ENCODE measurements at regions of chr22 and their contacts with region 1.

Region 1: GRCh38 chr22:41448189-41448808 is 1.7 kb upstream of the TOB2 start:
- DNase-seq: peak; percentile 90
- H3K4me3 Mint-ChIP-seq: peak overlapping the region; percentile 97
- H3K27ac Mint-ChIP-seq: peak overlapping the region; percentile 98
- H3K4me1 Mint-ChIP-seq: peaks cover 15% of the 10 kb centered on the region
- H3K27me3 Mint-ChIP-seq: peaks cover 2% of the 10 kb centered on the region

Region 2: DNA sequence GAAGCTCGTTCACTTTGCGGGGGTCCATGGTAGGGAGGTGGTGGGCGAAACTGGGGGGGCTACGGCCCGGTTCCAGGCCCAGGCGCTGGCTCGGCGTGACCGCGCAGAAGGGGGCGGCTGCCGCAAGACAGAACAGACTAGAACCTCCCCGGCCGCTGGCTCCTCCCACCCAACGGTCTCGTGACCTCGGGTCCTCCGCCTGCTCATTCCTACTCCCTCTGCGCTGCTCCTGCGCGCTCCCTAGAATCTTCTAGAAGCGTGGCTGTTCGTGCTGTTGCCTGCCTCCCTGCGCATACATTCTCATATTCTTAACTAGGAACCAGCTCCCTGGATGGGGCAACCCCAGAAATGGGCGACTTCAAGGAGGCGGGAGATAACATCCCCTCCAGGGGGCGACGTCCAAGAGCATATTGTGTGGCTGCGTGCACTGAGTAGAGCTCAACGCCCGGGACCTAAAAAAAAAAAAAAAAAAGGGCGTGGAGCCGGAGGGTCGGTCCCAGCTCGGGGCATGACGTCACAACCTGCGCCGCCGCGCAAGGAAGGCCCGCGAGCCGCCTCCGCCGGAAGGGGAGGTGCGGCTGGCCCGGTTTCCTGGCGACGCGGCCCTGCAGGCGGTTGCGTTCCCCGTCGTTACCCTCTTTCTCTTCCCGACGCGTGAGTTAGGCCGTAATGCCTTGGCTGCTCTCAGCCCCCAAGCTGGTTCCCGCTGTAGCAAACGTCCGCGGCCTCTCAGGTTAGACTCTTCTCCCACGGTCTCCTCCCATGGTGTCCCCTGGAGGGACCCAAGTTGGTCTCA is 591.6 kb before region 1 on chr22 and contains the starts of genes ST13 and XPNPEP3:
- intact Hi-C with region 1: loop called (anchors 1 kb)
- DNase-seq: peak; percentile 96
- H3K4me3 Mint-ChIP-seq: peak within 1 kb of the TSS; percentile 98
- H3K27ac Mint-ChIP-seq: peak within 1 kb of the TSS; percentile 100
- H3K4me1 Mint-ChIP-seq: peaks cover 38% of the 10 kb centered on the region
- H3K27me3 Mint-ChIP-seq: no peaks in the 10 kb centered on the region
- total RNA-seq, gene ST13: 190 and 192 TPM in 2 replicates
- total RNA-seq, gene XPNPEP3: 14.7 and 15.3 TPM in 2 replicates

Region 3: GRCh38 chr22:41204992-41205900 is 243.1 kb before region 1 on chr22 and contains the start of gene L3MBTL2:
- intact Hi-C with region 1: loop called (anchors 1 kb)
- DNase-seq: peak; percentile 98
- H3K4me3 Mint-ChIP-seq: peak within 1 kb of the TSS; percentile 97
- H3K27ac Mint-ChIP-seq: peak within 1 kb of the TSS; percentile 94
- H3K4me1 Mint-ChIP-seq: peaks cover 21% of the 10 kb centered on the region
- H3K27me3 Mint-ChIP-seq: peaks cover 12% of the 10 kb centered on the region
- total RNA-seq, gene L3MBTL2: 51.9 and 56.6 TPM in 2 replicates

Region 4: DNA sequence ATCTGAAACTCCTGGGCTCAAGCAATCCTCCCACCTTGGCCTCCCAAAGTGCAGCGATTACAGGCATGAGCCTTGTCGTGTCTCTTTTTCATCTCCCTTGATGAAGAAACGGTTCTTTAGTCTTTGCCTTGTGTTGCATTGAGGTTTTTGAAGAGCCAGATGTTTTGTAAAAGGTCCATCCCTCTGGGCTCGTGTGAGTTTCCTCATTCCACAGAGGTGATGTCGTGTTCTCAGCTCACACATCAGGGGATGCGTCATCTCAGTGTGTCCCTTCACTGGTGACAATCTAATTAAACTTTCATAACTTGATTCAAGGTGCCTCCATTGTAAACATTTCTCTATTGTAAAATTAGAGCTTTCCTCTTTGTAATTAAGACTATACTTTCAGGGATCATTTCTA is 96.2 kb before region 1 on chr22:
- intact Hi-C with region 1: no loop called
- DNase-seq: no peak
- H3K4me3 Mint-ChIP-seq: no peak overlapping the region
- H3K27ac Mint-ChIP-seq: no peak overlapping the region
- H3K4me1 Mint-ChIP-seq: no peaks in the 10 kb centered on the region
- H3K27me3 Mint-ChIP-seq: no peaks in the 10 kb centered on the region

Region 5: DNA sequence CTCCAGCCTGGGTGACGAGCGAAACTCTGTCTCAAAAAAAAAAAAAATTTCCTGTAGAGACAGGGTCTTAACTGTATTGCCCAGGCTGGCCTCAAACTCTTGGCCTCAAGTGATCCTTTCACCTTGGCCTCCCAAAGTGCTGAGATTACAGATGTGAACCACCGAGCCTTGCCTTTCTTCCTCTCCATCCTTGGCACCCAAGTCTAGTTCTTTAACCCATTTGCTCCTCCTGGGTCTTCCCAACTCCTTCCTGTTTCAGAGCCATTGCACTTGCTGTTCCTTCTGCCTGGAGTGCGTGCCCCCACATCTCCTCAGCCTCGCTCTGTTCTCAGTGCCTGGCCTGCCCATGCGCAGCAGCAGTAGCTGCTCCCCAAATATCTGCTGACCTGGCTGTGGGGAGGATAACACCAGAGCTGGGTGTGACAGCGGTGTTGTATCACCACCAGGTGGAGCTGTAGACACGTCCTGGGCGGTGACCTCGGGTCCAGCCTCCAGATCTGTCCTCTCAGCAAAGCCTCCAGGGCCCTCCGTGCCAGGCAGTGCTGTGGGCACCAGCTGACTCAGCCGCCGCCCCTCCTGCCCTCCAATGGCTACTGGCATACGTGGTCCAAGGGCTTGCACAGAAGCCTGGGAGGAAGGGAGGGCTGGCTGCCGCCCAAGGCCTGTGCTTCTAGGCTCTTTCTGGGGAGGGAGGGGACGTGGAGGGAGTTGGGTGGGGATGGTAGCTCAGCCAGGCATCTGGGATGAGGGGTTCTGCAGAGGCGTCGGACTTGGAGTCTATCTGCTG is 44.6 kb before region 1 on chr22:
- intact Hi-C with region 1: loop called (anchors 1 kb)
- DNase-seq: peak; percentile 79
- H3K4me3 Mint-ChIP-seq: no peak overlapping the region
- H3K27ac Mint-ChIP-seq: peak overlapping the region; percentile 32
- H3K4me1 Mint-ChIP-seq: peaks cover 11% of the 10 kb centered on the region
- H3K27me3 Mint-ChIP-seq: peaks cover 2% of the 10 kb centered on the region

Region 6: GRCh38 chr22:41589391-41590241 is 141.3 kb after region 1 on chr22 and contains the start of gene PMM1:
- intact Hi-C with region 1: loop called (anchors 1 kb)
- DNase-seq: peak; percentile 100
- H3K4me3 Mint-ChIP-seq: peak within 1 kb of the TSS; percentile 92
- H3K27ac Mint-ChIP-seq: peak within 1 kb of the TSS; percentile 82
- H3K4me1 Mint-ChIP-seq: peaks cover 17% of the 10 kb centered on the region
- H3K27me3 Mint-ChIP-seq: no peaks in the 10 kb centered on the region
- total RNA-seq, gene PMM1: 21.4 and 22.6 TPM in 2 replicates

Region 7: GRCh38 chr22:41873391-41873790 is 425.1 kb after region 1 on chr22:
- intact Hi-C with region 1: no loop called
- DNase-seq: peak; percentile 10
- H3K4me3 Mint-ChIP-seq: peak overlapping the region; percentile 76
- H3K27ac Mint-ChIP-seq: peak overlapping the region; percentile 82
- H3K4me1 Mint-ChIP-seq: peaks cover 67% of the 10 kb centered on the region
- H3K27me3 Mint-ChIP-seq: no peaks in the 10 kb centered on the region

Region 8: DNA sequence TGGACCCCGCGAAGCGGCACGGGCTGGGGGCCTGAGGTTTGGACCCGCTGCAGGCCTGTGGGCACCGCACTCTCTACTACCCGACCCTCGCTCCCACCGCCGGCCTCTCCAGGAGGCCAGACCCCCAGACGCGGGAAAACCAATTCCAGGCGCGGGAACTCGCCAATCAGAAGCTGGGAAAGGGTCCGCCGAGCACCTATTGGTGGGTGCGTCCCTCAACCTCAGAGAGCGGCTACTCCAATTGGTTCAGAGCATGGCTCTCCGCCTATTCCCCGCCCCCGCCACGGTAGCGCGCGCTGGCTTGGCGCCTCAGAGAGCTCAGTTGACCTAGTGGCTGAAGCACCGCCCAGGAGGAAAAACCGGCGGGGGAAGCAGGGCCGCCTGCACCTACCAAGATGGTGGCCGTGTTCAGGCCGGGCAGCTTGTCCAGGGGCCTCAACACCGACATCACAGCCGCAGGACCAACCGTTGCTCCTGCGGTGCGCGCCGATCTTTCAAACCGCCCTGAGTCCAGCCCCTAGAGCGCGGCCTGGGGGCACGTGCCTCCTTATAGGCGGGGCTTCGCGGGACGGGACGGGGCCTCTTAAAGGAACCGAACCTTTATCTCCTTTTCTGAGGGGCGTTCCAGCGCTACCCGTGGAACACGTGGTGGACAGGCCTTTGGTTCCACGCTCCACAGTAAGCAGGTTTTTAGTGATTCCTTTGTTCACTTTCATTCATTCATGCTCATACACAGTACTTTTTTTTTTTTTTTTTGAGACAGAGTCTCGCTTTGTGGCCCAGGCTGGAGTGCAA is 498.5 kb after region 1 on chr22 and contains the start of gene CENPM:
- intact Hi-C with region 1: loop called (anchors 10 kb)
- DNase-seq: peak; percentile 93
- H3K4me3 Mint-ChIP-seq: peak within 1 kb of the TSS; percentile 92
- H3K27ac Mint-ChIP-seq: peak within 1 kb of the TSS; percentile 93
- H3K4me1 Mint-ChIP-seq: peaks cover 47% of the 10 kb centered on the region
- H3K27me3 Mint-ChIP-seq: no peaks in the 10 kb centered on the region
- total RNA-seq, gene CENPM: 82.0 and 84.6 TPM in 2 replicates